HepG2 (cell line): ENCODE measurements at regions of chr3 and their contacts with region 1.

Region 1: DNA sequence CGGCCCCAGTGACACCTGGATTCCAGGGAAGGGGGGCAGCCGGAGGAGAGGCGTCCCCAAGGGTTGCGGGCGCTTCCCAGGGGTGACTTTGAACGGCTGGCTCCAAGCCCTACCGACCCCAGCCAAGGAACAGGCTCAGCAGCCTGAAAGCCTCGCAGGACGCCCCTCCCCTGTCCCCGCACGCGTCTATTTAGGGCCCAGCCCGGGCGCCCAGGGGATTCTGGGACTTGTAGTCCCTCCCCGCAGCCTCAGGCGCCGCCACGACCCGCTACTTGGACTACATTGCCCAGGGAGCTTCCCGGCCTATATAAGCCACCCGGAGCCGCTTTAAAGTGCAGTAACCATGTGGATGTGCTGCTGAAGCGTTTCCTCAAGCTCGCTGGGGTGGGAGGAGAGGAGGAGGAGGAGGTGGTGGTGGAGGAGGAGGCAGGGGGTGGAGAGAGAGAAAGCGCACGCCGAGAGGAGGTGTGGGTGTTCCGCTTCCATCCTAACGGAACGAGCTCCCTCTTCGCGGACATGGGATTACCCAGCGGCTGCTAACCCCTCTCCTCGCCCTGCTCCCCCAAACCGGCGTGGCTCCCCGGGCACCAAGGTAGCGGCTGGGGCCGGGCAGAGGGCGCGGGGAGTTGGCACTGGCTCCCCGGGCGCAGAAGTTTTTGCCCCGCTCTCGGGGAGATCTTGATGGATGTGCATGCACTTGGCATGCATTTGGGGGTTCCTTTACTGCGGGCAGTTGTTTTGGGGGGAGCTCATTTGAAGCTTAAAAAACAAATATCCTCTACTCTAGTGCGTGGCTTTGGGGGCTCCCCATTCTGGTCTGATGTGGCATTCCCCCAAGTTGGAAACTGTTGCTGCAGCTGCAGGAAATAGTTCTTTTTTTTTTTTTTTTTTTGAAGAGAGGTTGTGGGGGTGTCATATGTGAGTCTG is at the start of gene ITPR1:
- DNase-seq: peak; percentile 98
- ATAC-seq: peak; percentile 97
- H3K4me3 ChIP-seq: peak within 1 kb of the TSS; percentile 87 to 93 (median 92)
- H3K27ac ChIP-seq: peak within 1 kb of the TSS; percentile 80
- H3K4me1 ChIP-seq: peaks cover 55% of the 10 kb centered on the region
- H3K27me3 ChIP-seq: no peaks in the 10 kb centered on the region; a peak in 1 of 5 replicates
- CTCF ChIP-seq: peak; percentile 35
- EP300 ChIP-seq: peak; percentile 8 to 40; a peak in 1 of 4 replicates
- POLR2A ChIP-seq: peak; percentile 99 to 100
- RAD21 ChIP-seq: peak; percentile 36; the same call in 1 of the 2 replicates
- total RNA-seq, gene ITPR1: 10.1 and 11.4 TPM in 2 replicates

Region 2: GRCh38 chr3:4350789-4351163 is 142.5 kb before region 1 on chr3:
- CTCF ChIA-PET with region 1: no interaction called
- POLR2A ChIA-PET with region 1: interaction called, 4 read pairs
- in situ Hi-C with region 1: no loop called
- intact Hi-C with region 1: loop called (anchors 5 kb)
- DNase-seq: peak; percentile 53
- ATAC-seq: peak; percentile 76
- H3K4me3 ChIP-seq: no peak overlapping the region
- H3K27ac ChIP-seq: no peak overlapping the region
- H3K4me1 ChIP-seq: peaks cover 11% of the 10 kb centered on the region
- H3K27me3 ChIP-seq: no peaks in the 10 kb centered on the region
- CTCF ChIP-seq: peak; percentile 75
- EP300 ChIP-seq: no peak
- POLR2A ChIP-seq: no peak
- RAD21 ChIP-seq: peak; percentile 46; the same call in 1 of the 2 replicates

Region 3: DNA sequence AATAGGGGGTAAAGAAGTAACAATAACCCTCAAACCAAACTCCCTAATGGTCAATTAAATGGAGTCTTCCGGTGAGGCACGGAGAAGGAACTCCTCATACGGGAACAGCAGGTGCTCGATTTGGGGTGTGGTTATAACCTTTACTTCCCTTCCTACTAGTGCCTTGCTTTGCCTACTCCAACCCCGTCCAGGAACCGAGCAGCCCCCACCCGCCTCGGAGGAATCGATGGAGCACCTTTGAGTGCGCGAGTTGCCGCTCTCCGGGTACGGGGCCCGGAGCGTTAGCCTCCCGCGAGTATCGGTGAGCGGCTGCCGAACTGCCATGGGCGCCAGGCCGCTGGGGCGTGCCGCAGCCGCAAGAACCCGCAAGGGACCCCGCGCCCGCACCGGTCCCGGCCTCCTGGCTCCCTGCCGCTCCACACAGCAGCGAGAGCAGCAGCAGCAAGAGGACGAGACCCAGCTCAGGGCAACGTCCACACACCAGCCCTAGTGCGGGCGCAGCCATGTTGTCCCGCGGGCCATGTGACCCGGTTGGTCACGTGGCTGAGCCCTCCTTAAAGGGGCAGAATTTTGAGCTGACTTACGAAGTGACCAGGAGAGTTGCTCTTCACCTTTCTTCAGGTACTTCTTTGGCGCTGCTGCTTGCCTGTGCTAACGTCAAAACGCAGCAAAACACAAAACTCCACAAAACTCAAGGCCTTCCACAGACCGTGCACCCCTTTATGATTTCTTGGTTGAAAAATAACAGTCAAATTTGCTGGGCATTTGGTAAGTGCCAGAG is 26.3 kb before region 1 on chr3 and contains the start of gene SUMF1:
- CTCF ChIA-PET with region 1: no interaction called
- POLR2A ChIA-PET with region 1: interaction called, 49 read pairs
- in situ Hi-C with region 1: no loop called
- intact Hi-C with region 1: loop called (anchors 2 kb)
- DNase-seq: peak; percentile 75
- ATAC-seq: peak; percentile 98
- H3K4me3 ChIP-seq: peak within 1 kb of the TSS; percentile 73 to 85 (median 76)
- H3K27ac ChIP-seq: peak within 1 kb of the TSS; percentile 88
- H3K4me1 ChIP-seq: peaks cover 20% of the 10 kb centered on the region
- H3K27me3 ChIP-seq: peaks cover 0 to 1% of the 10 kb centered on the region in 2 experiments; a peak in 3 of 5 replicates
- CTCF ChIP-seq: no peak
- EP300 ChIP-seq: no peak
- POLR2A ChIP-seq: peak; percentile 91 to 97
- RAD21 ChIP-seq: peak; percentile 68
- total RNA-seq, gene SUMF1: 14.1 and 28.9 TPM in 2 replicates

Region 4: DNA sequence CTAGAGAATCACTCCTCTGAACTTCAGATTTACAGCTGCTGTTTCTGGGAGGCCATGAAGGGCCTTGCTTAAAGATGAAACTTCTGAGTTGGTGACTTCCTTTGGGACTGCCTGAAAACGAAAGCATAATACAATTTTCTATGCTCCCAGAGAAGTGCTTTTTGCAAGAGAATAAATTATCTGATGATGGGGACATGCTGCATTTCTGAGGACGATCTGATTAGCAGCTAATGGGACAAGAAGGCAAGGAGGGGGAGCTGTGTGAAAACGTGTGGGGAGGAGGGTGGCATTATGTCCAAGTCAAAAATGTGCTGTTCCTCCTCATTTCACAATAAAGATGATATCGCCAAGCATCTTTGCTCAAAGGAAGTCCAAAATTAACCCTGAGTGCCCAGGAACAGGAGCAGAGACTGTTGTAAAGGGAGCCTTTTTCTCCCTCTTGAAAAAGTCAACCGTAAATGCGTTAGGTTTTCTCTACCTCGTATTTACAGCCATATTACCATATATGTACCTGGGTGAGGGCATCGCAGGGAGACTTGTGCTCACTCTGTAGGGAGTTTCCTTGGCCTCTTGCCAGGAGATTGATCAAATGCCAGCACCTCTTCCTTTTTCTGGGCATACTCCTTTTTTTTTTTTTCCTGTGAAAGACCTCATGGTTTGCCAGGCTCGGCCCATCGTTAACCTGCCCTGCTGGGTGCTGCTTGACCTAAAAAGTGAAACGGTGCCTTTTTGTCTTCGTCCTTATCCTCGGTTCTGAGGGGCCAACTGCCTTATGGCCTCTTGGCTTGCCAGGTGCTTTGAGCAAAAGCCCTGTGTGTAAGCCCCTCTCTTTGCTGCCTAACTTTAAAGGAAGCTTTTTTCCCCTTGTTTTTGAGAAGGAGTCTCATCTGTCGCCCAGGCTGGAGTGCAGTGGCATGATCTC is 11.3 kb after region 1 on chr3:
- CTCF ChIA-PET with region 1: no interaction called
- POLR2A ChIA-PET with region 1: interaction called, 120 read pairs
- in situ Hi-C with region 1: no loop called
- intact Hi-C with region 1: loop called (anchors 2 kb)
- DNase-seq: no peak
- ATAC-seq: no peak
- H3K4me3 ChIP-seq: no peak overlapping the region
- H3K27ac ChIP-seq: no peak overlapping the region
- H3K4me1 ChIP-seq: peaks cover 86% of the 10 kb centered on the region
- H3K27me3 ChIP-seq: no peaks in the 10 kb centered on the region
- CTCF ChIP-seq: no peak
- EP300 ChIP-seq: no peak
- POLR2A ChIP-seq: no peak
- RAD21 ChIP-seq: no peak

Region 5: GRCh38 chr3:4565806-4566501 is 72.7 kb after region 1 on chr3:
- CTCF ChIA-PET with region 1: no interaction called
- POLR2A ChIA-PET with region 1: interaction called, 50 read pairs
- in situ Hi-C with region 1: loop called (anchors 5 kb)
- intact Hi-C with region 1: loop called (anchors 1 kb)
- DNase-seq: peak; percentile 85
- ATAC-seq: peak; percentile 86
- H3K4me3 ChIP-seq: peak overlapping the region in 1 of 3 experiments; percentile 32; a peak in 2 of 6 replicates
- H3K27ac ChIP-seq: peak overlapping the region; percentile 68
- H3K4me1 ChIP-seq: peaks cover 67% of the 10 kb centered on the region
- H3K27me3 ChIP-seq: no peaks in the 10 kb centered on the region
- CTCF ChIP-seq: no peak
- EP300 ChIP-seq: peak in 1 of 2 experiments; percentile 78; a peak in 2 of 4 replicates
- POLR2A ChIP-seq: no peak
- RAD21 ChIP-seq: no peak

Region 6: GRCh38 chr3:4633078-4634004 is 140.1 kb after region 1 on chr3:
- CTCF ChIA-PET with region 1: no interaction called
- POLR2A ChIA-PET with region 1: interaction called, 3 read pairs
- in situ Hi-C with region 1: no loop called
- intact Hi-C with region 1: loop called (anchors 10 kb)
- DNase-seq: peak; percentile 52
- ATAC-seq: peak; percentile 82
- H3K4me3 ChIP-seq: no peak overlapping the region
- H3K27ac ChIP-seq: no peak overlapping the region
- H3K4me1 ChIP-seq: no peaks in the 10 kb centered on the region
- H3K27me3 ChIP-seq: no peaks in the 10 kb centered on the region
- CTCF ChIP-seq: peak; percentile 86
- EP300 ChIP-seq: no peak
- POLR2A ChIP-seq: no peak
- RAD21 ChIP-seq: peak; percentile 70